ENCODE measurements at regions of chr6 and their contacts with region 1.

Region 1: GRCh38 chr6:6494677-6495076 is 93.8 kb upstream of the LY86 start:
- DNase-seq: peak; percentile 82
- H3K4me3 Mint-ChIP-seq: no peak overlapping the region
- H3K27ac Mint-ChIP-seq: no peak overlapping the region
- H3K4me1 Mint-ChIP-seq: peaks cover 14% of the 10 kb centered on the region
- H3K27me3 Mint-ChIP-seq: no peaks in the 10 kb centered on the region
- CTCF ChIP-seq: peak; percentile 69

Region 2: DNA sequence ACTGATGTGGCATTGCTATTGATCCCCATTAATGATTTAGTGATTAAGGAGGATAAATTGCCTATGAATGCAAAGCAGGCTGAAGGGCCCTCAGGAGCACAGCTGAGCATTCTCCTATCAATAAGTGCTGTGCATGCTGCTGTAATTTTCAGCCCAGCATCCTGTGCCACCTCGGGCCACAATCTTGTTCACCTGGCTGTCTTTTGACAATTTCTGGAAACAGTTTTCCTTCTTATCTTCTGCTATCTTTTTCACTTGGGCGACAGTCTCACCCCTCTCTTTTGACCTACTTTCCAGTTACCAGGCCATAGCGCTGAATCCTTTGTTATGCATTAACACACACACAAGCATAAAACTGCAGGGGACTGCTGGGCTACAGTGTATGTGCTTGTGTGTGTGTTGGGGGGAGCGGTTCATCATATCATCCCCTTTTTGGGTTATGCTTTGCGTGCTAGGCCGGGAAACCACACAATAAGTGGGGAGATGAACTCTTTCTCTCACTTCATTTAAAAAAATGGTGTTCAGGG is 234.4 kb before region 1 on chr6:
- CTCF ChIA-PET with region 1: interaction called, 3 read pairs
- POLR2A ChIA-PET with region 1: no interaction called
- intact Hi-C with region 1: loop called (anchors 5 kb)
- DNase-seq: no peak
- H3K4me3 Mint-ChIP-seq: no peak overlapping the region
- H3K27ac Mint-ChIP-seq: no peak overlapping the region
- H3K4me1 Mint-ChIP-seq: no peaks in the 10 kb centered on the region
- H3K27me3 Mint-ChIP-seq: peaks cover 81% of the 10 kb centered on the region
- CTCF ChIP-seq: no peak

Region 3: DNA sequence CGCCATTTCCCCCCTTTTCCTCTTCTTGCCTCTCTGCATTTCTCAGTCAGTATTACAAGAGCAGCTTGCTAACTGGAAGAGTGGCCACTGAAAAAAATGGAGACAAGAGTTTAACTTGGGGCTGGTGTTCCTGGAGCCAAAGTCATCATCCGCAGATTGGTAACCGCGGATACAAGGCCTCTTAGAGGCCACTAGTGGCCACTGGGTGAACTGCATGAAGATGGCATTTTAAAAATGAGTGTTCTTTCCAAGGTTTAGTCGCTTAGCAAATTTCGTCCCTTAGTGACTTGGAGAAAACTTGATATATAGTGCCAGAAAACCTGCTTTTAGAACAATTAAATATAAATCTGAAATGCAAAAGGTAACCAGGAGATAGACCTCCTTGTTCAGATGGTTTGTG is 179.0 kb before region 1 on chr6:
- CTCF ChIA-PET with region 1: no interaction called
- POLR2A ChIA-PET with region 1: no interaction called
- intact Hi-C with region 1: loop called (anchors 1 kb)
- DNase-seq: peak; percentile 56
- H3K4me3 Mint-ChIP-seq: no peak overlapping the region
- H3K27ac Mint-ChIP-seq: no peak overlapping the region
- H3K4me1 Mint-ChIP-seq: no peaks in the 10 kb centered on the region
- H3K27me3 Mint-ChIP-seq: peaks cover 21% of the 10 kb centered on the region
- CTCF ChIP-seq: peak; percentile 85

Measured in MCF 10A (cell line).